ENCODE measurements at regions of chr4 and their contacts with region 1.

Region 1: GRCh38 chr4:164779811-164780216 is 25.9 kb downstream of the SMIM31 start:
- DNase-seq: peak; percentile 79 to 83
- H3K4me3 ChIP-seq: no peak overlapping the region
- H3K4me1 ChIP-seq: peaks cover 8% of the 10 kb centered on the region
- H3K27me3 ChIP-seq: no peaks in the 10 kb centered on the region

Region 2: GRCh38 chr4:164888096-164888715 is 108.4 kb after region 1 on chr4:
- in situ Hi-C with region 1: loop called (anchors 5 kb)
- DNase-seq: peak in 1 of 2 experiments; percentile 3
- H3K4me3 ChIP-seq: no peak overlapping the region
- H3K4me1 ChIP-seq: peaks cover 25% of the 10 kb centered on the region
- H3K27me3 ChIP-seq: no peaks in the 10 kb centered on the region

Region 3: DNA sequence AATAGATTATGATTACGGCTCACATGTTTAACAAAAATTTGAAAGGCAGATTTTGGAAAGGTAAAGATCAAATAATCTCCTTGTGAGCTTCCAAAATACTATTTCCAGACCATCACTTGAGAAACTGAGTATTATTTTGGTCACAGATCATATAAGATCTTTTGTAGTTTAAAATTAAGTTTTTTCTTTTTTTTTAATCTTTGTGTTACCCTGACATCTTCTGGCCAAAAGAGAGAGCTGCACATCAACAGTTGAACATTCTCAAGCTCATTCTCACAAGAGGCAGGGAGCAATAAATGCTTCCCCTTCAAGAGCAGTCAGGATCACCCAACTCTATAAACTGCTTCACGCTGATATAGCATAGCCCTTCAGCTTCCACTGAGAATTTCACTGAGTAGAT is 317.0 kb after region 1 on chr4:
- in situ Hi-C with region 1: loop called (anchors 10 kb)
- DNase-seq: peak in 1 of 2 experiments; percentile 42
- H3K4me3 ChIP-seq: no peak overlapping the region
- H3K4me1 ChIP-seq: no peaks in the 10 kb centered on the region
- H3K27me3 ChIP-seq: no peaks in the 10 kb centered on the region